ENCODE measurements at regions of chr16 and their contacts with region 1.

Region 1: DNA sequence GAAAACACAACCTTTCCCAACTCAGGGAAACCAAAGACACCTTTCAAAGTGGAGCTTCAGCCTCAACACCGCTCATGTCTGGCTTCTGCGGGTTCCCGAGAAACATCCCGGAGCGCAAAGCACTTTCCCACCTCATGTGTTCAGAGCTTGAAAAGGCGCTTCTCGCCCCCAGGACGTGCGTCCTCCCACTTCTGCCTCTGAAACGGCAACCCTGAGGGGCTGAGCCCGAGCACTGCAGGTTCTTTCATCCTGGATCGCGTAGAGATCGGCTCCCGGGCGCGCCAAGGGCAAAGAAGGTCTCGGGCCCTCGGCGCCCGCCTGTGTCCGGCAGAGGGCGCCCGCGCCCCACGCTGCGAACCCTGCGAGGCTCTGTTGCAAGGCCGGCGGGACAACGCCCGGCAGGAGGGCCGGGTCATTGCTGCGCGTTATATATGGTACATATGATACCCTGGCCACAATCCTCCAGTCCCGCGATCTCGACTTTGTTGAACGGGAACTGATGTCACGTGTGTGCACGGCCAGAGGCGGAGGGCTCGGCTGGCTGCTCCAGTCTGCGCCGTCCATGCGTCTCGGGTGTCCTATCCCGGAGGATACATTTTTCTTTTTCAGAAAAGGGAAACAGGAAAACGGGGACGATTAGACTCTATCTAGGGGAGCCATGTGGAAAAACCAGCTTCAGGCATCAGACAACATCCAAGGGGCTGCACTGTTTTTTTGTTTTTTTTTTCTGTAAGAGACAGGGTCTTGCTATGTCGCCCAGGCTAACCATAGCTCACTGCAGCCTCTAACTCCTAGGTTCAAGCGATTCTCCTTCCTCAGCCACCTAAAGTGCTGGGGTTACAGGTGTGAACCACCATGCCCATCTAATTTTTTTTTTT is 19.1 kb downstream of the COQ7 start:
- DNase-seq: peak; percentile 81
- ATAC-seq: peak; percentile 95
- H3K4me3 Mint-ChIP-seq: peak overlapping the region; percentile 47
- H3K27ac Mint-ChIP-seq: no peak overlapping the region
- H3K4me1 Mint-ChIP-seq: peaks cover 6% of the 10 kb centered on the region
- H3K27me3 Mint-ChIP-seq: peaks cover 6% of the 10 kb centered on the region
- CTCF ChIP-seq: peak; percentile 98

Region 2: GRCh38 chr16:19105891-19106624 is 19.5 kb after region 1 on chr16:
- CTCF ChIA-PET with region 1: interaction called, 10 read pairs
- POLR2A ChIA-PET with region 1: no interaction called
- intact Hi-C with region 1: no loop called
- DNase-seq: no peak
- ATAC-seq: no peak
- H3K4me3 Mint-ChIP-seq: no peak overlapping the region
- H3K27ac Mint-ChIP-seq: no peak overlapping the region
- H3K4me1 Mint-ChIP-seq: peaks cover 3% of the 10 kb centered on the region
- H3K27me3 Mint-ChIP-seq: peaks cover 4% of the 10 kb centered on the region
- CTCF ChIP-seq: no peak

Region 3: DNA sequence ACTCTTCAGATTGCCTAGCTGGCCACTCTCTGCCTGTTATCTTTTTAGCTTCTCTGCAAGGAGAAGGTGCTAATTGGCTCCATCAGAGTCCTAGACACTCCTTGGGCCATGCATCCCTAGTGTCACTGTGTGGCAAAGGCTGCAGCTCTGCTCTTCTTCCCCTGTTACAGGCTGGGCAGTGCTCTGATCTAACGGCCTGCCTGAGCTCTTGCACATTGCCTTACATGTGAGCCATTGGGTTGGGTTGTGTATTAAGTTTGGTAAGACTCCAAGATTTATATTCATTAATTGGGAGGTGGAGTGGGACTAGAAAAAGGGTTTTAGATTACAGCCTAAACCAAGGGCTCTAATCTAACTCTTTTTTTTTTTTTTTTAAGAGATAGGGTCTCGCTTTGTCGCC is 58.4 kb after region 1 on chr16:
- CTCF ChIA-PET with region 1: interaction called, 13 read pairs
- POLR2A ChIA-PET with region 1: no interaction called
- intact Hi-C with region 1: no loop called
- DNase-seq: no peak
- ATAC-seq: no peak
- H3K4me3 Mint-ChIP-seq: no peak overlapping the region
- H3K27ac Mint-ChIP-seq: no peak overlapping the region
- H3K4me1 Mint-ChIP-seq: no peaks in the 10 kb centered on the region
- H3K27me3 Mint-ChIP-seq: peaks cover 23% of the 10 kb centered on the region
- CTCF ChIP-seq: no peak

Region 4: DNA sequence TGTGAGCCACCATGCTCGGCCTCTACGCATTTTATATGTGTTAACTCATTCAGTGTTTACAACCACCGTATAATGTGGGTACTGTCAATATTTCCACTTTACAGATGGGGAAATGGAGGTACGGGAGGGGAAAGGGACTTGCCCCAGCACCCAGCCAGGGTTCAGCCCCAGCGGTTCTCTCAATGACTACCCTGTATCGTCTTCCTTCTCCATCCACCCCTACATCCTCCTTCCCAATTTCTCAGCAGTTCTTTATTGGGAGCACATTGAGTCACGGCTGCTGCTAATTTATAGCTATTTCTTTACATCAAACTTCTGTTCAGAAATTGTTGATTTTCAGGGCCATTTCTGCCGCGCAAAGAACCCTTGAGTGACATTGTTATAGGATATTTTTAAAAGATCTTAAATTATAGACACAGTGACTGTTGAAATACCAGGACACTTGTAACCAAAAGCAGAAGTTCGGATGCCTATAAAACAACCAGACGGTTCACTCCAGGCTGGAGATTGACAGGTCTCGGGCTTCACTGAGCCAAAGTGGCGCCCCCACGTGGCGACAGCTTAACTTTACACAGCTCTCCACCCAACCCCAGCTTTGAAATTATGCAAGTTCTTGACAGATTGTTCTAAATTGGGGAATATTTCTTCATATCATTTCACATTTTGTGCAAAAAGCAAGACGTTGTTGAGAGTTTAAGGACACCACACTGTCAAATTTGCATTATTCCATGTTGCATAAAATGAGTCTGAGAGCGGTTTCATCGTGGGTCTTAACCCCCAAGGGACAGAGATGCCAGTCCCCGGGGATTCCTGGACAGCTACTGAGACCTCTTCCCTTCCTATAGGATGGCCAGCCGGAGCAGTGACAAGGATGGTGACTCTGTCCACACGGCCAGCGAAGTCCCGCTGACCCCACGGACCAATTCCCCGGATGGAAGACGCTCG is 93.3 kb after region 1 on chr16:
- CTCF ChIA-PET with region 1: interaction called, 53 read pairs
- POLR2A ChIA-PET with region 1: no interaction called
- intact Hi-C with region 1: loop called (anchors 5 kb)
- DNase-seq: peak; percentile 58
- ATAC-seq: peak; percentile 42
- H3K4me3 Mint-ChIP-seq: no peak overlapping the region
- H3K27ac Mint-ChIP-seq: no peak overlapping the region
- H3K4me1 Mint-ChIP-seq: no peaks in the 10 kb centered on the region
- H3K27me3 Mint-ChIP-seq: peaks cover 4% of the 10 kb centered on the region
- CTCF ChIP-seq: peak; percentile 67

Region 5: DNA sequence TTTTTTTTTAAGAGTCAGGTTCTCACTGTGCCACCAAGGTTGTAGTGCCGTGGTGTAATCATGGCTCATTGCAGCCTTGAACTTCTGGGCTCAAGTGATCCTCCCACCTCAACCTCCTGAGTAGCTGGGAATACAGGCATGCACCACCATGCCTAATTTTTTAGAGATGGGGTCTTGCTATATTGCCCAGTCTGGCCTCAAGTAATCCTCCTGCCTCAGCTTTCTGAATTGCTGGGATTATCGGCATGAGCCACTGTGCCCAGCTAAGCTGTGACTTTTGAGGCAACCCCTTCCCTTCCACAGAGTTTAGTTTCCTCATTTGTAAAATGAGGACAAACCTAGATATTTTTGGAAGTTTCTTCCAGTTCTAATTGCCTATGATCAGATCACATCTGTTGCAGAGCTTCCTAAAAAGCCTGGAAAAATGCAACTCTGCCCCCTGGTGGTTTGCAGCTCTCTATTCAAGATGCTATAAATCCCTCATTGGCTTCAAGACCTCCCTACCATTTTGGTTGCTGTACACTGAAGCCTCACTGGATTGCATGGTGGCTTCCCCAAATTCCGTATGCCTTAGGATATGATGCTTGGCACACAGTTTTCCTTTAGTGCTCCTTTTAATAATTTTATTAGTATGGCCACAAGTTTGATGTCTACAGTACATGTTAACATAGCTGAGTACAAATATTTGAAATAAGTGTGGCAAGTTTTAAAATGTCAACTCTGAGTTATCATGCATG is 416.0 kb after region 1 on chr16:
- CTCF ChIA-PET with region 1: interaction called, 33 read pairs
- POLR2A ChIA-PET with region 1: no interaction called
- intact Hi-C with region 1: no loop called
- DNase-seq: peak; percentile 83
- ATAC-seq: peak; percentile 42
- H3K4me3 Mint-ChIP-seq: no peak overlapping the region
- H3K27ac Mint-ChIP-seq: no peak overlapping the region
- H3K4me1 Mint-ChIP-seq: no peaks in the 10 kb centered on the region
- H3K27me3 Mint-ChIP-seq: no peaks in the 10 kb centered on the region
- CTCF ChIP-seq: peak; percentile 74

Measured in activated CD8-positive, alpha-beta T cell treated with anti-CD3 and anti-CD28 coated beads for 36 hours (primary cell).